CD4-positive, alpha-beta T cell (primary cell): ENCODE measurements at regions of chr11 and their contacts with region 1.

Region 1: GRCh38 chr11:125592305-125593112 is at the start of gene STT3A:
- DNase-seq: peak; percentile 94 to 100 (median 97)
- ATAC-seq: peak; percentile 91
- H3K4me3 ChIP-seq: peak within 1 kb of the TSS; percentile 94
- H3K4me3 Mint-ChIP-seq: peak within 1 kb of the TSS; percentile 94
- H3K27ac ChIP-seq: peak within 1 kb of the TSS; percentile 94 to 98
- H3K27ac Mint-ChIP-seq: peak within 1 kb of the TSS; percentile 96
- H3K4me1 ChIP-seq: peaks cover 32% of the 10 kb centered on the region
- H3K4me1 Mint-ChIP-seq: peaks cover 46% of the 10 kb centered on the region
- H3K27me3 ChIP-seq: no peaks in the 10 kb centered on the region
- H3K27me3 Mint-ChIP-seq: no peaks in the 10 kb centered on the region
- CTCF ChIP-seq: no peak
- total RNA-seq, gene STT3A: 35.1 to 38.6 TPM

Region 2: GRCh38 chr11:125514336-125515101 is 78.0 kb before region 1 on chr11:
- CTCF ChIA-PET with region 1: no interaction called
- POLR2A ChIA-PET with region 1: interaction called, 3 read pairs
- intact Hi-C with region 1: loop called in 1 of 2 experiments (anchors 1 kb)
- DNase-seq: peak; percentile 4 to 92 (median 32)
- ATAC-seq: peak; percentile 87
- H3K4me3 ChIP-seq: no peak overlapping the region
- H3K4me3 Mint-ChIP-seq: peak overlapping the region; percentile 49
- H3K27ac ChIP-seq: peak overlapping the region; percentile 56 to 75
- H3K27ac Mint-ChIP-seq: peak overlapping the region; percentile 77
- H3K4me1 ChIP-seq: peaks cover 34% of the 10 kb centered on the region
- H3K4me1 Mint-ChIP-seq: peaks cover 42% of the 10 kb centered on the region
- H3K27me3 ChIP-seq: no peaks in the 10 kb centered on the region
- H3K27me3 Mint-ChIP-seq: no peaks in the 10 kb centered on the region
- CTCF ChIP-seq: no peak

Region 3: GRCh38 chr11:125568970-125569914 is 23.3 kb before region 1 on chr11 and contains the start of gene EI24:
- CTCF ChIA-PET with region 1: interaction called, 19 read pairs
- POLR2A ChIA-PET with region 1: interaction called, 136 read pairs
- intact Hi-C with region 1: loop called (anchors 1 kb)
- DNase-seq: peak; percentile 76 to 95 (median 86)
- ATAC-seq: peak; percentile 94
- H3K4me3 ChIP-seq: peak within 1 kb of the TSS; percentile 80
- H3K4me3 Mint-ChIP-seq: peak within 1 kb of the TSS; percentile 95
- H3K27ac ChIP-seq: peak within 1 kb of the TSS; percentile 68 to 74
- H3K27ac Mint-ChIP-seq: peak within 1 kb of the TSS; percentile 84
- H3K4me1 ChIP-seq: peaks cover 18% of the 10 kb centered on the region
- H3K4me1 Mint-ChIP-seq: peaks cover 26% of the 10 kb centered on the region
- H3K27me3 ChIP-seq: no peaks in the 10 kb centered on the region
- H3K27me3 Mint-ChIP-seq: no peaks in the 10 kb centered on the region
- CTCF ChIP-seq: peak; percentile 76
- total RNA-seq, gene EI24: 21.0 to 22.8 TPM

Region 4: GRCh38 chr11:125887373-125888324 is 295.1 kb after region 1 on chr11 and contains the start of gene HYLS1:
- CTCF ChIA-PET with region 1: interaction called, 3 read pairs
- POLR2A ChIA-PET with region 1: interaction called, 20 read pairs
- intact Hi-C with region 1: loop called (anchors 5 kb)
- DNase-seq: peak; percentile 87 to 98 (median 91)
- ATAC-seq: peak; percentile 88
- H3K4me3 ChIP-seq: peak within 1 kb of the TSS; percentile 63
- H3K4me3 Mint-ChIP-seq: peak within 1 kb of the TSS; percentile 95
- H3K27ac ChIP-seq: peak within 1 kb of the TSS; percentile 71 to 78
- H3K27ac Mint-ChIP-seq: peak within 1 kb of the TSS; percentile 92
- H3K4me1 ChIP-seq: peaks cover 20% of the 10 kb centered on the region
- H3K4me1 Mint-ChIP-seq: peaks cover 50% of the 10 kb centered on the region
- H3K27me3 ChIP-seq: no peaks in the 10 kb centered on the region
- H3K27me3 Mint-ChIP-seq: no peaks in the 10 kb centered on the region
- CTCF ChIP-seq: no peak
- total RNA-seq, gene HYLS1: 1.2 to 1.3 TPM

Region 5: DNA sequence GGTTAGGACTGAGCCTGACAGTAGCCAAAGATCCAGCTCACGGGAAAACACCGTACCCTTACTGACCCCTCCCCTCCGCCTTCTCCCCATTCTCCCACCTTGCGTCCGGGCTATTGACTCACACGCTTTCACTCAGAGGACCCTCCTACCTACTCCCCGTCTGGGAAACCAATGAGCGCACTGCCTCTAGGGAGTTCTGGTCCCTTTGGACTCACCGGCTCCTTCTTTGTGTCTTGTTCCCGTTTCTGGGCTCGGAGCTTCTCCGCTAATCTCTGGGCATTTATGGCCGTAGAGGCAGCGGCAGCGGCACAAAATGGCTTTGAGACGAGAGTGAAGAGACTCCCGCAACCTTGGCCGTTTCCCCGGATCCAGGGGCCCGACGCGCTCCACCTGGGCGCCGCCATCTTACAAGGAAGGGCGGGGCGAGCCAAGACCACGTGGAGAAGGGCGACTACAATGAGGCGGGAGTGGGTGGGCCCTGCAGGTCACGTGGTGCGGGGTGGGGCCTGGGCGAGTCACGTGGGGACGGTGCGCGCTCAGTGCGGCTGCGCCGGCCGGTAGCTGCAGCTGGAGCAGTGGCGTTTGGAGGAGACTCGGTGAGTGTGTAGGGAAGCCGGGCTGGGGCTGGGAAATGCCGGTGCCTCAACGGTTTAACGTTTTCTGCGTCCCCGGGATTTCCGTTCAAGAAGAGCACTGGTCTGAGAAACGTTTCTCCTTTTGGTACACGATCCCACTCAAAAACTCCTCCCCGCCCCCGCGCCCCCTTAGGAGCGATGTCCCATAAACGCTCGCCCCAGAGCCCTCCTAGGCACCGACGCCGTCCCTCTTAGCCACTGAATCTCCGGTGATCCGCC is 619.0 kb after region 1 on chr11 and contains the starts of genes FAM118B and RPUSD4:
- CTCF ChIA-PET with region 1: no interaction called
- POLR2A ChIA-PET with region 1: interaction called, 4 read pairs
- intact Hi-C with region 1: loop called (anchors 2 to 10 kb)
- DNase-seq: peak; percentile 96 to 100 (median 98)
- ATAC-seq: peak; percentile 97
- H3K4me3 ChIP-seq: peak within 1 kb of the TSS; percentile 99
- H3K4me3 Mint-ChIP-seq: peak within 1 kb of the TSS; percentile 100
- H3K27ac ChIP-seq: peak within 1 kb of the TSS; percentile 50 to 78
- H3K27ac Mint-ChIP-seq: peak within 1 kb of the TSS; percentile 93
- H3K4me1 ChIP-seq: peaks cover 21% of the 10 kb centered on the region
- H3K4me1 Mint-ChIP-seq: peaks cover 61% of the 10 kb centered on the region
- H3K27me3 ChIP-seq: no peaks in the 10 kb centered on the region
- H3K27me3 Mint-ChIP-seq: no peaks in the 10 kb centered on the region
- CTCF ChIP-seq: no peak
- total RNA-seq, gene FAM118B: 1.0 to 1.8 TPM
- total RNA-seq, gene RPUSD4: 33.1 to 37.6 TPM